ENCODE measurements at regions of chr19 and their contacts with region 1.

Region 1: DNA sequence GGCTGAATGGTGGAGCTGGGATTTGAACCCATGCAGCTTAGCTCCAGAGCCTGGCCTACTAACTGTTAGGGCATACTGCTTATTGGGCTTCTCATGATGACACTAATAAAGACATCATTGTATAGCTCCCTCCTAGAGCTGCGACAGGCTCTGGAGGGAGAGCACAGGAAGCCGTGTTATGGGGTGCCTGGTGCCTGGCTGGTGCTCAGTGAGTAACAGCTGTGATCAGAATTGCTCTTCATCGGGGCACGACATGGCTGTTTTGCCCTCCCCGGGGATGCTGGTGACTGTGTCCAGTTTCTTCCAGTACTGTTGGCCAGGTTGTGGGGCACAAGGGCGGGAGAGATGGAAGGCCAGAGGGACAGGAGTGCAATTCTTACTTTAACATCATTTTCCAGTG is 5.1 kb downstream of the LYPD5 start:
- DNase-seq: no peak
- H3K4me3 ChIP-seq: no peak overlapping the region
- H3K27me3 ChIP-seq: peaks cover 13% of the 10 kb centered on the region
- CTCF ChIP-seq: no peak

Region 2: GRCh38 chr19:43809762-43810696 is 12.9 kb after region 1 on chr19:
- CTCF ChIA-PET with region 1: interaction called, 15 read pairs
- POLR2A ChIA-PET with region 1: no interaction called
- DNase-seq: no peak
- H3K4me3 ChIP-seq: no peak overlapping the region
- H3K27me3 ChIP-seq: peaks cover 2% of the 10 kb centered on the region; the same call in 1 of the 2 replicates
- CTCF ChIP-seq: peak; percentile 56